ENCODE measurements at regions of chr19 and their contacts with region 1.

Region 1: GRCh38 chr19:48899781-48900476 is at the start of gene NUCB1:
- DNase-seq: peak; percentile 99
- CTCF ChIP-seq: no peak

Region 2: GRCh38 chr19:48770260-48770659 is 129.7 kb before region 1 on chr19:
- CTCF ChIA-PET with region 1: no interaction called
- POLR2A ChIA-PET with region 1: no interaction called
- DNase-seq: no peak
- CTCF ChIP-seq: no peak

Region 3: DNA sequence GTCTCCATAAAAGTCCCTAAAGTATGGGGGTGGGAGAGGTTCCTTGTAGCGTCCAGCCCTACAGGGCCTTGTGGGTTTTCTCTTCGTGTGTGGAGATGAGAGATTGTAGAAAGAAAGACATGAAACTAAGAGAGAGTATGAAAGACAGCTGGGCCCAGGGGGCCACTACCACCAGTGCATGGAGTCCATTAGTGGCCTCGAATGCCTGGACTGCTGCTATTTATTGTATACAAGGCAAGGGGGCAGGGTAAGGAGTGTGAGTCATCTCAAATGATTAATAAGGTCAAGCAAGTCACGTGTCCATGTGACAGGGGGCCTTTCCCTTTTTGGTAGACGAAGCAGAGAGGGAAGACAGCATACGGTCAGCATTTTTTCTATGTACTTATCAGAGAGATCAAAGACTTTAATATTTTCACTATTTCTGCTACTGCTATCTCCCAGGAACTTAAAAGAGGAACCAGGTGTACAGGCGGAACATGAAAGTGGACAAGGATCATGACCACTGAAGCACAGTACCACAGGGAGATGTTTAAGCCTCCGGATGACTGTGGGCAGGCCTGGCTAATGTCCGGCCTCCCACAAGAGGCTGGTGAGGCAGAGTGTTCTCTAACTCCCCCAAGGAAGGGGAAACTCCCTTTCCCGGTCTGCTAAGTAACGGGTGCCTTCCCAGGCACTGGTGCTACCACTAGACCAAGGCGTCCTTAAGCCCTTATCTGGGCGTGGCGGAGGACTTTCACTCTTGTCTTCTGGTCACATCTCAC is 119.1 kb before region 1 on chr19:
- CTCF ChIA-PET with region 1: no interaction called
- POLR2A ChIA-PET with region 1: no interaction called
- DNase-seq: no peak
- CTCF ChIP-seq: no peak

Region 4: GRCh38 chr19:48853483-48853882 is 46.4 kb before region 1 on chr19:
- CTCF ChIA-PET with region 1: no interaction called
- POLR2A ChIA-PET with region 1: no interaction called
- DNase-seq: no peak
- CTCF ChIP-seq: no peak

Region 5: GRCh38 chr19:48881741-48882657 is 17.9 kb before region 1 on chr19:
- CTCF ChIA-PET with region 1: interaction called, 4 read pairs
- POLR2A ChIA-PET with region 1: interaction called, 30 read pairs
- DNase-seq: no peak
- CTCF ChIP-seq: no peak